ENCODE measurements at regions of chr10 and their contacts with region 1.

Region 1: GRCh38 chr10:2927958-2928840 is 139.1 kb upstream of the PFKP start:
- DNase-seq: peak; percentile 35 to 54
- ATAC-seq: peak; percentile 60 to 90
- H3K4me3 ChIP-seq: no peak overlapping the region
- H3K27ac ChIP-seq: no peak overlapping the region
- H3K4me1 ChIP-seq: no peaks in the 10 kb centered on the region
- H3K27me3 ChIP-seq: no peaks in the 10 kb centered on the region
- CTCF ChIP-seq: peak; percentile 39 to 75 (median 64)
- POLR2A ChIP-seq: no peak

Region 2: GRCh38 chr10:2978111-2978510 is 49.9 kb after region 1 on chr10:
- in situ Hi-C with region 1: no loop called
- intact Hi-C with region 1: no loop called
- DNase-seq: no peak
- ATAC-seq: no peak
- H3K4me3 ChIP-seq: no peak overlapping the region
- H3K27ac ChIP-seq: no peak overlapping the region
- H3K4me1 ChIP-seq: no peaks in the 10 kb centered on the region
- H3K27me3 ChIP-seq: no peaks in the 10 kb centered on the region
- CTCF ChIP-seq: no peak
- POLR2A ChIP-seq: no peak

Region 3: DNA sequence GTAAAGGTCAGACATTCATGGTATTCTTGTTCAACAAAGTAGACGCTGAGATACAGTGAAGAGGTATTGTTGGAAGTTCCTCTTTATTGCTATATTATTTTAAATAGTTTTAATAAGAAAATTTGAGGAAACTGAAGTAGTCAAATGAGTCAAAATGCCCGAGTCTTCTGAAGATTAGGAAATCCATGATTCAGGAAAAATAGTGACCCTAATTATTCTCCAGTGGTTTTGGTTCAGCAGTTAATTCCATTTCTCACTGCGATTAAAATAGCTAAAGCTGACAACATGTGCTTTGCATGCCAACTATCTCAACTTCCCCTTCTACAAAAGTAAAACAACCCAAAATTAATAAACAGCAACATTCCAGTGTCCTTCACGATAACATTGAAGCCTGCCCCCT is 106.4 kb after region 1 on chr10:
- in situ Hi-C with region 1: loop called in 1 of 4 experiments (anchors 5 kb)
- intact Hi-C with region 1: no loop called
- DNase-seq: no peak
- ATAC-seq: no peak
- H3K4me3 ChIP-seq: no peak overlapping the region
- H3K27ac ChIP-seq: no peak overlapping the region
- H3K4me1 ChIP-seq: no peaks in the 10 kb centered on the region
- H3K27me3 ChIP-seq: no peaks in the 10 kb centered on the region
- CTCF ChIP-seq: no peak
- POLR2A ChIP-seq: no peak

Region 4: DNA sequence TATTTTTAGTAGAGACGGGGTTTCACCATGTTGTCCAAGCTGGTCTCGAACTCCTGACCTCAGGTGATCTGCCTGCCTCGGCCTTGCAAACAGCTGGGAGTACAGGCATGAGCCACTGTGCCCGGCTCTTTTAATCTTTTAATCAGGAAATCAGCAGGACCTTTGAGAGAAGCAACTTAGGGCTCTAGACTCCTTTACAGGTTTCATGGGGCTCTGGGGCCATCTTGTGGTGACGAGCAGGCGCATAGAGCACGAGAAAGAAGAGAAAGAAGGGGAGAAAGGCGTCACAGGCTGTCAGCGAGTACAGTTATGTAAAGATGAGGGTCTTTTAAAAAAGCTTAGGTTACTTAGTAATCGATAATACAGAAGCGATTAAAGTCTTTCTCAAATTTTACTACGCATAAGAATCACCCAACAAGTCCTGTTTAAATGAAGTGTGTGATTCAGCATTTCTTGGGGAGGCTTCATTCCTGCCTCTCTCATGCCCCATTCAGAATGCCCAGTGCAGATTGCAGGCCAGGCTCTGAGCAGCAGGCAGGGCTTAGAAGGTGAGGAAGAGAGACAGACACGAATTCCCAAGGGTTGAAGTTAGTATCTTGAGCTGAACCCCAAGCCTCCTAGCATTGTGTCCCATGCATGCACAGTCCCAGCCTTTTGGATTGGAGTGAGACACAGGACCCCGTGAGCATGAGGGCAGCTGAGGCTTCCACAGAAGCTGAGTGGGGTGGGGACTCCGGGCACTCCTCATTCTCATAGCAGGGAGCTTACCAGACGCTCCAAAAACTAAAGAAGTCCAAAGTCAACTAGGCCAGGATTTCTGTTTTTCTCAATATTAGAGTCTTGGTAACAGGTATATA is 115.5 kb after region 1 on chr10:
- in situ Hi-C with region 1: no loop called
- intact Hi-C with region 1: loop called (anchors 2 kb)
- DNase-seq: no peak
- ATAC-seq: peak; percentile 39 to 68
- H3K4me3 ChIP-seq: no peak overlapping the region
- H3K27ac ChIP-seq: no peak overlapping the region
- H3K4me1 ChIP-seq: no peaks in the 10 kb centered on the region
- H3K27me3 ChIP-seq: no peaks in the 10 kb centered on the region
- CTCF ChIP-seq: peak; percentile 24 to 63 (median 47)
- POLR2A ChIP-seq: no peak

Region 5: GRCh38 chr10:3197348-3198003 is 269.3 kb after region 1 on chr10:
- in situ Hi-C with region 1: loop called in 1 of 4 experiments (anchors 25 kb)
- intact Hi-C with region 1: loop called (anchors 5 kb)
- DNase-seq: peak; percentile 66 to 73
- ATAC-seq: peak; percentile 88 to 90
- H3K4me3 ChIP-seq: peak overlapping the region; percentile 20 to 37 (median 30)
- H3K27ac ChIP-seq: no peak overlapping the region
- H3K4me1 ChIP-seq: peaks cover 5 to 7% of the 10 kb centered on the region in 2 donors
- H3K27me3 ChIP-seq: no peaks in the 10 kb centered on the region
- CTCF ChIP-seq: peak; percentile 80 to 96 (median 90)
- POLR2A ChIP-seq: no peak

Region 6: DNA sequence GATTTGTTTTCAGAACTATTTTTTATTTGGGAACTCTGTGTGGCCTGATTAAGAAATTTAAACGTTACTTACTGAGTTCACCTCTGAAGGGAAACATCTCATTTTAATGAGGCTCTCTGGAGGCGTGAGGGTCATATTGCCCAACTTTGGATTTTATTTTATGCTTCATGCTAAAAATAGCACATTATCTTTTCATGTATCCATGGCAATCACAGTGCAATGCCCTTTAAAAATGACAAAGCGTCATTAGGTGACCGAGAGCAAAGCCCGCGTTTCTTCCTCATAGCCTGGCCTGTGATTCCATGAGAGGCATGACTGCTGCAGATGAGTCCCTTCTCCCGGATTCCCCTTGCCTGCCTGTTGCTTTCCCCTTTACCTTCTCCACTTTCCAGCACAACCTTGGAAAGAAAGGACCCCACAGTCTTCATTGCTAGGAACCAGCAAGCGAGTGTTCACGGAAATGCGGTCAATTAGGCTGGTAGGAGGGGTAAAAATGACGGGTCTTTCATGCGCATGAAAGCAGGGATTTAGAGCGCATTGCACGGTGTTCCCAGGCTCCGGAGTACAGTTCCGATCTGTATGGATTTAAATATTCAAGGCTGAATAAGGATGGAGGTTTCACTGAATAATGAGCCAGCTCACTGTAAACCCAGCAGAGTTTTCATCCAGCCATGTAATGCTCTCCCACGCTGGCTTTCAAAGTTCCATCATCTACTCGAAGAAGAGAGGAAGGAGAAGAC is 342.5 kb after region 1 on chr10:
- in situ Hi-C with region 1: no loop called
- intact Hi-C with region 1: no loop called
- DNase-seq: no peak
- ATAC-seq: no peak
- H3K4me3 ChIP-seq: no peak overlapping the region
- H3K27ac ChIP-seq: no peak overlapping the region
- H3K4me1 ChIP-seq: peaks cover 2 to 8% of the 10 kb centered on the region in 2 donors
- H3K27me3 ChIP-seq: no peaks in the 10 kb centered on the region
- CTCF ChIP-seq: no peak
- POLR2A ChIP-seq: no peak

Measured in gastrocnemius medialis (tissue), 4 donors.